ENCODE measurements at regions of chr12 and their contacts with region 1.

Region 1: DNA sequence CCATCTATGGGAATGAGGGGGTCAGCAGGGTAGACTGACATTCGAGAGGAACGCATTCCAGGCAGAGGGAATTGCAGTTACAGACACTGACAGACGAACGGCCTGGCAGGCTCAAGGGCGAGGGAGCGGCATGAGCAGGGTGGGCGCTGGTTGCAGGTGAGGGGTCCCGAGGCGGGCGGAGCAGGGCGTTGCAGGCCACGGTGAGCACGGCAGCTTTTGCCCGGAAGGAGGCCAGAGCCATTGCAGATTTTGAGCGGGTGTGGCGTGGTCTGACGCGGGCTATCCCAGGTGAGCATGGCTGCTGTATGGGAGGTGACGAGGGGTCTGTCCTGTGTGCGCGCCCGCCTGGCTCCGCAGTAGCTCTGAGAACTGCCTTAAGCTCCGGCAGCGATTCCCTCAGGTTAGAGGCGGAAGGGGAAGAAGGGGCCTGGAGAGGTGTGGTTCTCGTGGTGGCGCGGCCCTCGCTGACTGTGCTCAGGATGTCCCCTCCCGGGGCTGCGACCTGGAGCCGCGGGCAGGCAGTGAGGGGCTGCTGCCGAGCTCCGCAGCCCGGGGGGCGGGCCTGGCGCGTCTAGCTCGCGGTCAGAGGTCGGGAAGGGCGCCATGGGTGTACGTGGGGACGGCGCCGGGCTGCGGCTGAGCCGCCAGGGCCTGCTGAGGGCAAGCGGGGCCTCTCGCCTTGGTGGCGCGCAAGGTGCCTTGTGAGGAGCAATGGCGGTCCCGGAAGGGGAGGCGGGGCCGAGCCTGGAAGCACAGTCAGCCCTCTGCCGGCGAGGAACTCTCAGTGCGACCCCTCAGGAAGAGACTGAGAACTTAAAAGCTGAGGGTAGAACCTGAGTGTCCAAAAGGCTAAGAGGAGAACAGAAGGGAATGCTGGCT is 177.1 kb downstream of the CACNA1C start:
- DNase-seq: no peak
- ATAC-seq: no peak

Region 2: GRCh38 chr12:2057041-2057794 is 172.7 kb before region 1 on chr12:
- intact Hi-C with region 1: no loop called
- DNase-seq: peak; percentile 71
- ATAC-seq: peak; percentile 9

Region 3: GRCh38 chr12:2447861-2448260 is 218.0 kb after region 1 on chr12:
- intact Hi-C with region 1: no loop called
- DNase-seq: no peak
- ATAC-seq: no peak

Region 4: DNA sequence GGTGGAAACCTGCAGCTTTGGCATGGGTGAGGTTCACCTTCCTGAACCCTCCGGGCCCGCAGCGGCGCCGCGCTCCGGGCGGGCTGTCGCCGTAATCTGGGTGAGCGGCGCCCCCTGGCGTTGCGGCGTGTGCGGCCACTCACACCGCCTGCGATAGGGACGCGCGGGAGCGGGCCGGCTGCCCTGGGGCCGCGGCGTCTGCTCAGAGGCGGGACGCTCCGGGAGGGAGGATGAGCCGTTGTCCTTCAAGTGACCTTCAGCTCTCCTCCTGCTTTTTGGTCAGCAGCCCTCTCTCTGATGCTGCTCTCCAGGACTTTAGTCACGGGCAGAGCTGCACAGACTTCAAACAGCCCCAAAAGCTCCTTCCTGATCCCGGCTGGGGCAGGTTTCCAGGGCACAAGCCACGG is 353.2 kb after region 1 on chr12:
- intact Hi-C with region 1: loop called (anchors 5 kb)
- DNase-seq: peak; percentile 84
- ATAC-seq: peak; percentile 91